Mammary epithelial cell (primary cell): ENCODE measurements at regions of chr17 and their contacts with region 1.

Region 1: GRCh38 chr17:74784125-74784810 is 8.1 kb upstream of the NAT9 start:
- DNase-seq: no peak
- H3K4me3 ChIP-seq: no peak overlapping the region
- H3K27ac ChIP-seq: no peak overlapping the region
- H3K4me1 ChIP-seq: no peaks in the 10 kb centered on the region
- H3K27me3 ChIP-seq: no peaks in the 10 kb centered on the region
- CTCF ChIP-seq: no peak

Region 2: GRCh38 chr17:74730491-74731346 is 53.5 kb before region 1 on chr17:
- CTCF ChIA-PET with region 1: no interaction called
- dilution Hi-C with region 1: no loop called
- in situ Hi-C with region 1: no loop called
- intact Hi-C with region 1: no loop called
- DNase-seq: no peak
- H3K4me3 ChIP-seq: no peak overlapping the region
- H3K27ac ChIP-seq: no peak overlapping the region
- H3K4me1 ChIP-seq: no peaks in the 10 kb centered on the region
- H3K27me3 ChIP-seq: peaks cover under 1% of the 10 kb centered on the region
- CTCF ChIP-seq: no peak

Region 3: GRCh38 chr17:74956093-74956492 is 171.8 kb after region 1 on chr17:
- CTCF ChIA-PET with region 1: interaction called, 17 read pairs
- dilution Hi-C with region 1: no loop called
- in situ Hi-C with region 1: no loop called
- intact Hi-C with region 1: no loop called
- DNase-seq: no peak
- H3K4me3 ChIP-seq: no peak overlapping the region
- H3K27ac ChIP-seq: no peak overlapping the region
- H3K4me1 ChIP-seq: peaks cover 13% of the 10 kb centered on the region
- H3K27me3 ChIP-seq: no peaks in the 10 kb centered on the region
- CTCF ChIP-seq: no peak